ENCODE measurements at regions of chr3 and their contacts with region 1.

Region 1: GRCh38 chr3:25648107-25648535 is 16.6 kb downstream of the TOP2B start:
- DNase-seq: peak; percentile 90
- ATAC-seq: peak; percentile 93
- H3K4me3 Mint-ChIP-seq: no peak overlapping the region
- H3K27ac Mint-ChIP-seq: no peak overlapping the region
- H3K4me1 Mint-ChIP-seq: peaks cover 48% of the 10 kb centered on the region
- H3K27me3 Mint-ChIP-seq: no peaks in the 10 kb centered on the region

Region 2: DNA sequence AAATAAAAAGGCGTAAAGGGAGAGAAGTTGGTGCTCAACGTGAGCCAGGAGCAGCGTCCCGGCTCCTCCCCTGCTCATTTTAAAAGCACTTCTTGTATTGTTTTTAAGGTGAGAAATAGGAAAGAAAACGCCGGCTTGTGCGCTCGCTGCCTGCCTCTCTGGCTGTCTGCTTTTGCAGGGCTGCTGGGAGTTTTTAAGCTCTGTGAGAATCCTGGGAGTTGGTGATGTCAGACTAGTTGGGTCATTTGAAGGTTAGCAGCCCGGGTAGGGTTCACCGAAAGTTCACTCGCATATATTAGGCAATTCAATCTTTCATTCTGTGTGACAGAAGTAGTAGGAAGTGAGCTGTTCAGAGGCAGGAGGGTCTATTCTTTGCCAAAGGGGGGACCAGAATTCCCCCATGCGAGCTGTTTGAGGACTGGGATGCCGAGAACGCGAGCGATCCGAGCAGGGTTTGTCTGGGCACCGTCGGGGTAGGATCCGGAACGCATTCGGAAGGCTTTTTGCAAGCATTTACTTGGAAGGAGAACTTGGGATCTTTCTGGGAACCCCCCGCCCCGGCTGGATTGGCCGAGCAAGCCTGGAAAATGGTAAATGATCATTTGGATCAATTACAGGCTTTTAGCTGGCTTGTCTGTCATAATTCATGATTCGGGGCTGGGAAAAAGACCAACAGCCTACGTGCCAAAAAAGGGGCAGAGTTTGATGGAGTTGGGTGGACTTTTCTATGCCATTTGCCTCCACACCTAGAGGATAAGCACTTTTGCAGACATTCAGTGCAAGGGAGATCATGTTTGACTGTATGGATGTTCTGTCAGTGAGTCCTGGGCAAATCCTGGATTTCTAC is 220.0 kb before region 1 on chr3 and contains the start of gene RARB:
- CTCF ChIA-PET with region 1: no interaction called
- POLR2A ChIA-PET with region 1: no interaction called
- intact Hi-C with region 1: no loop called
- DNase-seq: peak; percentile 15
- ATAC-seq: peak; percentile 49
- H3K4me3 Mint-ChIP-seq: no peak within 1 kb of the TSS
- H3K27ac Mint-ChIP-seq: no peak within 1 kb of the TSS
- H3K4me1 Mint-ChIP-seq: peaks cover 6% of the 10 kb centered on the region
- H3K27me3 Mint-ChIP-seq: peaks cover 37% of the 10 kb centered on the region
- total RNA-seq, gene RARB: not detected

Region 3: DNA sequence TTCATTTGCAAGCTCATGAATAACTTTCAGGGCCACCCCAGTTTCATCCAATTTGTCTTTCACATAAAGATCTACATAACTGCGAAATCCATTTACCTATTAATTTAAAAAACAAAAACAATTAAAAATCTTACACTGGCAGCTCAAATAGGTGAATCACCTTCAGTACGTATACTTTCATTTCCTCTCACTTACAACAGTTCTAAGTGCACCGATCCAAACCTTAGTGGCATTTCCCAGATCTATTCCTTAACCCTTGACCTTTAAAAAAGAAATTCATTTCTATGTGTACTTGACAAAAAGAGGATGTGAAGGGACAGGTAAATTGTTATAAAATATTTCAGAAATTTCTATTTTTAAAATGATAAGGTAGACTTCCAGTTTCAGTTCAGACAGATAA is 14.2 kb before region 1 on chr3:
- CTCF ChIA-PET with region 1: interaction called, 18 read pairs
- POLR2A ChIA-PET with region 1: no interaction called
- intact Hi-C with region 1: no loop called
- DNase-seq: no peak
- ATAC-seq: no peak
- H3K4me3 Mint-ChIP-seq: no peak overlapping the region
- H3K27ac Mint-ChIP-seq: no peak overlapping the region
- H3K4me1 Mint-ChIP-seq: peaks cover 6% of the 10 kb centered on the region
- H3K27me3 Mint-ChIP-seq: no peaks in the 10 kb centered on the region

Region 4: GRCh38 chr3:25782938-25783660 is 135.0 kb after region 1 on chr3 and contains the start of gene NGLY1:
- CTCF ChIA-PET with region 1: interaction called, 8 read pairs
- POLR2A ChIA-PET with region 1: no interaction called
- intact Hi-C with region 1: loop called in 1 of 2 experiments (anchors 5 kb)
- DNase-seq: peak; percentile 92
- ATAC-seq: peak; percentile 93
- H3K4me3 Mint-ChIP-seq: peak within 1 kb of the TSS; percentile 92
- H3K27ac Mint-ChIP-seq: peak within 1 kb of the TSS; percentile 90
- H3K4me1 Mint-ChIP-seq: peaks cover 54% of the 10 kb centered on the region
- H3K27me3 Mint-ChIP-seq: no peaks in the 10 kb centered on the region
- total RNA-seq, gene NGLY1: 86.1 to 135 TPM

Region 5: GRCh38 chr3:25863416-25863959 is 215.4 kb after region 1 on chr3:
- CTCF ChIA-PET with region 1: interaction called, 116 read pairs
- POLR2A ChIA-PET with region 1: no interaction called
- intact Hi-C with region 1: no loop called
- DNase-seq: no peak
- ATAC-seq: no peak
- H3K4me3 Mint-ChIP-seq: no peak overlapping the region
- H3K27ac Mint-ChIP-seq: no peak overlapping the region
- H3K4me1 Mint-ChIP-seq: no peaks in the 10 kb centered on the region
- H3K27me3 Mint-ChIP-seq: peaks cover 1% of the 10 kb centered on the region

Region 6: GRCh38 chr3:26118165-26118564 is 470.0 kb after region 1 on chr3:
- CTCF ChIA-PET with region 1: no interaction called
- POLR2A ChIA-PET with region 1: no interaction called
- intact Hi-C with region 1: loop called in 1 of 2 experiments (anchors 10 kb)
- DNase-seq: no peak
- ATAC-seq: no peak
- H3K4me3 Mint-ChIP-seq: no peak overlapping the region
- H3K27ac Mint-ChIP-seq: no peak overlapping the region
- H3K4me1 Mint-ChIP-seq: no peaks in the 10 kb centered on the region
- H3K27me3 Mint-ChIP-seq: no peaks in the 10 kb centered on the region

Measured in activated CD4-positive, alpha-beta T cell treated with anti-CD3 and anti-CD28 coated beads for 36 hours (primary cell).